ENCODE measurements at regions of chr2 and their contacts with region 1.

Region 1: DNA sequence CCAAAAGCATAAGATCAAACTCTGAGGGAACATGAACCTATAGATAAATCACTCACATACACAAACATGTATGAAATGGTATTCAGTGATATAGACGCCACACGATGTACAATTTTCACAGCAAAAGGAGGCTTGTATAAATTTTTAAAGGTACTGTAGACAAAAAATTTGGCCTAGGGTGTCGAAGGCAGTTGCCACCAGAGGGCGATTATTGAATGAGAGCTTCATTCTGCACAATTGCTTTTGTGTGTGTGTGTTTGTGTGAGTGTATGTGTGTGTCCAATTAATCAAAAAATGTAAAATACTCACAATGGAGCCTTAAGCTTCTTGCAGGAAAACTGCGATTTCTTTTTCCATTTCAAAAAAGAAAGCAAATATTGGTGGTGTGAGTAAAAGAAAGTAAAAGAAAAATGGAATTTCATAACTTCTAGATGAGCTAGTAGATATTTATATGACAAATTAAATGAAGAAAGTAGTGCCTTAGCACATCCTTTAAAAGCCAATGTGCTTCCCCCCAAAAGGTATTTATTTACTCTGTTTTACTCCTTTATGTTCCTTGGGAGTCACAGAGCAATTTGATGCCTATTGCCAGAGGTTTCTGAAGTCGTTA is 800.1 kb downstream of the SATB2 start:
- DNase-seq: no peak
- ATAC-seq: peak; percentile 64
- H3K4me3 ChIP-seq: no peak overlapping the region
- H3K27ac ChIP-seq: no peak overlapping the region
- H3K4me1 ChIP-seq: no peaks in the 10 kb centered on the region
- H3K27me3 ChIP-seq: no peaks in the 10 kb centered on the region
- CTCF ChIP-seq: peak; percentile 50 to 51 (median 50); a peak in 5 of 6 replicates
- EP300 ChIP-seq: no peak
- POLR2A ChIP-seq: no peak
- RAD21 ChIP-seq: peak; percentile 51

Region 2: DNA sequence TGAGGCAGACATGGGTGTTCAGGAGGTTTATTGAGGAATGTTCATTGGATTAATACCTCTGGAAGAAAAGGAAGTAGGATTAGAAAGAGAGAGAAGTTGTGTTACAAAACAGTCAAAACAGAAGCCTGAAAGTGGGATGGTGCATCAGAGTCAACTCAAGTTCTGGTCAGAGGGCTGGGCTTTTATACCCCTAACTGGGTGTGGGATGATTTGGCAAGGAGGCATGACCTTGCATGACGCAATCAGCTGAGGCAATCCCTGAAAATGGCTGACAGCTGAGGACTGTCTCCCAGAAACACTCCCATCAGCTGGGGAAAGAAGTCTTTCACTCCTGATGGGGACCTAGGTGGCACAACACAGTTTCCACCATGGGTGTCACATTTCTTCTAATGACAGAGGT is 18.0 kb before region 1 on chr2:
- CTCF ChIA-PET with region 1: interaction called, 17 read pairs
- POLR2A ChIA-PET with region 1: no interaction called
- RAD21 ChIA-PET with region 1: interaction called, 9 read pairs
- SMC1A ChIA-PET with region 1: interaction called, 5 read pairs
- in situ Hi-C with region 1: no loop called
- intact Hi-C with region 1: no loop called
- DNase-seq: no peak
- ATAC-seq: no peak
- H3K4me3 ChIP-seq: no peak overlapping the region
- H3K27ac ChIP-seq: no peak overlapping the region
- H3K4me1 ChIP-seq: no peaks in the 10 kb centered on the region
- H3K27me3 ChIP-seq: no peaks in the 10 kb centered on the region
- CTCF ChIP-seq: no peak
- EP300 ChIP-seq: no peak
- POLR2A ChIP-seq: no peak
- RAD21 ChIP-seq: no peak

Region 3: GRCh38 chr2:198692907-198693510 is 35.4 kb after region 1 on chr2:
- CTCF ChIA-PET with region 1: interaction called, 47 read pairs
- POLR2A ChIA-PET with region 1: interaction called, 6 read pairs
- RAD21 ChIA-PET with region 1: interaction called, 51 read pairs
- SMC1A ChIA-PET with region 1: interaction called, 69 read pairs
- in situ Hi-C with region 1: no loop called
- intact Hi-C with region 1: no loop called
- DNase-seq: no peak
- ATAC-seq: peak; percentile 77
- H3K4me3 ChIP-seq: no peak overlapping the region
- H3K27ac ChIP-seq: no peak overlapping the region
- H3K4me1 ChIP-seq: no peaks in the 10 kb centered on the region
- H3K27me3 ChIP-seq: no peaks in the 10 kb centered on the region
- CTCF ChIP-seq: no peak
- EP300 ChIP-seq: no peak
- POLR2A ChIP-seq: no peak
- RAD21 ChIP-seq: no peak

Region 4: GRCh38 chr2:198706476-198707082 is 49.0 kb after region 1 on chr2:
- CTCF ChIA-PET with region 1: interaction called, 22 read pairs
- POLR2A ChIA-PET with region 1: interaction called, 5 read pairs
- RAD21 ChIA-PET with region 1: interaction called, 23 read pairs
- SMC1A ChIA-PET with region 1: interaction called, 14 read pairs
- in situ Hi-C with region 1: no loop called
- intact Hi-C with region 1: no loop called
- DNase-seq: no peak
- ATAC-seq: no peak
- H3K4me3 ChIP-seq: no peak overlapping the region
- H3K27ac ChIP-seq: no peak overlapping the region
- H3K4me1 ChIP-seq: no peaks in the 10 kb centered on the region
- H3K27me3 ChIP-seq: no peaks in the 10 kb centered on the region
- CTCF ChIP-seq: no peak
- EP300 ChIP-seq: no peak
- POLR2A ChIP-seq: no peak
- RAD21 ChIP-seq: no peak

Region 5: DNA sequence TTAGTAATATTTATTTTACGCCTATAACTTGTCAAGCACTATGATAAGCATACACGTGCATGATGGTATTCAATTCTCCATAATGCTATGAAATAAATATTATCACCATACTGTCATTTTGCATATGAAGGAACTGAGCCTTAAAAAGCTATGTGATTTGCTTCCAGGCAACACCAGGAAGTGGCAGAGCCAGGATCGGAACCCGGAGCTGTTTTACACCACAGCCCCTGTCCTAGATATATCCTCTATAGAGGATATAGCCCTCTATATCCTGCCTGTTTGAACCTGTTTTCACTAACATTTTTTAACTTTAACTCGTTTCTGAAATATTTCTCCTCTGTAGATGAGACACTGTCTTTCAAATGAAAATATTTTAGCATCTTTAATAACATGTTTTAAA is 110.1 kb after region 1 on chr2:
- CTCF ChIA-PET with region 1: interaction called, 12 read pairs
- POLR2A ChIA-PET with region 1: no interaction called
- RAD21 ChIA-PET with region 1: interaction called, 23 read pairs
- SMC1A ChIA-PET with region 1: interaction called, 36 read pairs
- in situ Hi-C with region 1: no loop called
- intact Hi-C with region 1: no loop called
- DNase-seq: no peak
- ATAC-seq: no peak
- H3K4me3 ChIP-seq: no peak overlapping the region
- H3K27ac ChIP-seq: no peak overlapping the region
- H3K4me1 ChIP-seq: no peaks in the 10 kb centered on the region
- H3K27me3 ChIP-seq: no peaks in the 10 kb centered on the region
- CTCF ChIP-seq: no peak
- EP300 ChIP-seq: no peak
- POLR2A ChIP-seq: no peak
- RAD21 ChIP-seq: no peak

Region 6: GRCh38 chr2:198905881-198906612 is 248.4 kb after region 1 on chr2:
- CTCF ChIA-PET with region 1: interaction called, 5 read pairs
- POLR2A ChIA-PET with region 1: interaction called, 3 read pairs
- RAD21 ChIA-PET with region 1: interaction called, 7 read pairs
- SMC1A ChIA-PET with region 1: interaction called, 11 read pairs
- in situ Hi-C with region 1: no loop called
- intact Hi-C with region 1: no loop called
- DNase-seq: peak; percentile 45
- ATAC-seq: peak; percentile 91
- H3K4me3 ChIP-seq: no peak overlapping the region
- H3K27ac ChIP-seq: no peak overlapping the region
- H3K4me1 ChIP-seq: peaks cover 9% of the 10 kb centered on the region
- H3K27me3 ChIP-seq: no peaks in the 10 kb centered on the region
- CTCF ChIP-seq: no peak
- EP300 ChIP-seq: peak; percentile 69 to 73; a peak in 3 of 4 replicates
- POLR2A ChIP-seq: no peak
- RAD21 ChIP-seq: no peak

Region 7: DNA sequence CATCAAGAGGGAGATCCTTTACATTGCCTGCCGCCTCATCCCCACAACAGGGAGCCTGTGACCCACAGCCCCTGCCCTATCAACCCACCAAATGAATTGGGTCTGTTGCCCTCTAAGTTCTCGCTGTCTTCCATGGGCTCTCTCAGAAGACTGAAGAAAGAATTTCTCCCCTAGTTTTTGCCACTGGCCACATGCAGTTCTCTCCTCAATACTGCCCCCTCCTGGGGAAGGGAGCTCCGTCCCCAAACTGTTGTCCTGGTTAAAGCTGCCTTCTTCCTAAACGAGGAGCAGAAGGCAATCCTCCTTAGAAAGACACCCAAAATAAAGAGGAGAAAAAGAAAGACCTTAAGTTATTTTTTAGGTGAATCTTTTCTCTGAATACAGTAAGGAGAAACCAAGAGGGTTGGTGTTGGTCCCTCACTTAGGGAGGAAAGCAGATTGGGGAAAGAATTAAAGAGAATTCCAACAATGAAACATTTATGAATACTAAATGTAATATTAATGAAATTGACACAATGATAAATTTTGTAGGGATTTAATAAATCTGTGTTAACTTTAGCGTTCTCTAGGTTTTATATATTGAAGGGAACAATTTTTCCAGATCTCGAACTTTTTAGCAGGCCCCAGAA is 831.3 kb after region 1 on chr2:
- CTCF ChIA-PET with region 1: interaction called, 30 read pairs
- POLR2A ChIA-PET with region 1: no interaction called
- RAD21 ChIA-PET with region 1: interaction called, 7 read pairs
- SMC1A ChIA-PET with region 1: interaction called, 18 read pairs
- in situ Hi-C with region 1: loop called (anchors 10 kb)
- intact Hi-C with region 1: loop called (anchors 1 kb)
- DNase-seq: no peak
- ATAC-seq: peak; percentile 73
- H3K4me3 ChIP-seq: no peak overlapping the region
- H3K27ac ChIP-seq: no peak overlapping the region
- H3K4me1 ChIP-seq: no peaks in the 10 kb centered on the region
- H3K27me3 ChIP-seq: no peaks in the 10 kb centered on the region
- CTCF ChIP-seq: peak; percentile 72 to 90 (median 83)
- EP300 ChIP-seq: no peak
- POLR2A ChIP-seq: no peak
- RAD21 ChIP-seq: peak; percentile 72